IMR-90 (cell line): ENCODE measurements at regions of chr9 and their contacts with region 1.

Region 1: DNA sequence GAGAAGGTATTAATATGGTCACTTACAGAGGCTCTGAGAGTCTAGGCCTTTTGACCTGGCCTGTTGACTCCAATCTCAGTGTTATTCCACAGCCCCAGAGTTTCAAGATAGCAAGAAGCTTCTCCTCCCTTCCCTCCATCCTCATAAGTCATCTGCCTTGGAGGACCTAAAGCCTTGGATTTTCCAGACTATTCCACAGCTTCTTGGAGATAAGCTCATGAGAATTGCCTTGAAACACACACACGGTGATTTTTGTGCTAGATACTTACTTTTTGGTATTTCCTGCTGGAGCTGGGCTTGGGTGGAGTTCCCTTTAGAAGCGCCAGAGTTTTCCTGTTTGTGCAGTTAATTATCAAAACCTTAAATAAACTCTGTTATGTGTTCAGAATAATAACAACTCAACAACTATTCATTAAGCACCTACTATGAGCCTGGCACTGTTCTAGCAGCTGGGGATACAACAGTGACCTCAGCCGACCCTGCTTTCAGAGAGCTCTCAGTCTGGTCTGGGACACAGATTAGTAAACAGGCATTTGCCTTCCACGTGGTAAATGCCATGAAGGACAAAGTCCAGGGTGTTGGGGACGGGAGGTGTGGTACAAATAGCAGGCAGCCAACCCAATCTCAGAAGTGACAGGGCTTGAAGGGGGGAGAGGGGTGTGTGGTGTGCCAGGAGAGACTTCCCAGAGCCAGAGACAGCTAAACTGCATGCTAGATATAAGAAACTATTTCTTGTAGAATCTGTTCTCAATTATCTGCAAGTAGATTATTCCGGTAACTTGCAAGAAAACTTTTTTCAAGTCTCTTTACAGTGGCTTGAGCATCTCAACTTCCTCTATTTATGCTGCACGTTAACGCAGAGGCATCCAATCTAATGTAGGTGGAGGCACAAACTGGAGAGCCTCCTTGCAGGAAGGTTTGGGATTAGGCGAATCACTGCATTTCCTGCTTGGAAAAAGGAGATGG is 55.9 kb upstream of the KLF9 start:
- DNase-seq: no peak
- ATAC-seq: no peak
- H3K4me3 ChIP-seq: no peak overlapping the region
- H3K27ac ChIP-seq: no peak overlapping the region
- H3K4me1 ChIP-seq: peaks cover 5% of the 10 kb centered on the region
- H3K27me3 ChIP-seq: no peaks in the 10 kb centered on the region
- CTCF ChIP-seq: no peak
- POLR2A ChIP-seq: no peak
- RAD21 ChIP-seq: no peak

Region 2: DNA sequence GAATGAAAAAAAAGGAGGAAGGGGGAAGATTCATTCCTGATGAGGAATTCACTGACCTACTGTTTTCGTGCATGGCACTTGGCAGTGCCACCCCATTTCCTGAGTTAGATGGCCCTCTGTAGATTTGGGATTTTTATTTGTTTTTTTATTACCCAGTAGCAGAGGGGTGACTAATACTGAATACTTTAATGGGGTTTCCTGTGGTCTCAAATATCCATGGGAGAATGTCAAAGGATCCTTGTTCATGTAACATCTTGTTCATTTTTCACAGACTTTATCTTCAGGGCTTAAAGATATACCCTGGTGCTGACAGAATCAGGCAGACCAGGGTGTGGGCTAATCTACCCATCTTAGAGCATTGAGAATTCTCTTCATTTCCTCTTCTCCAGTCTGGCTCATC is 333.7 kb before region 1 on chr9:
- CTCF ChIA-PET with region 1: no interaction called
- POLR2A ChIA-PET with region 1: no interaction called
- dilution Hi-C with region 1: no loop called
- in situ Hi-C with region 1: no loop called
- intact Hi-C with region 1: no loop called
- DNase-seq: peak; percentile 69
- ATAC-seq: peak; percentile 52
- H3K4me3 ChIP-seq: no peak overlapping the region
- H3K27ac ChIP-seq: no peak overlapping the region
- H3K4me1 ChIP-seq: peaks cover 6% of the 10 kb centered on the region
- H3K27me3 ChIP-seq: no peaks in the 10 kb centered on the region
- CTCF ChIP-seq: no peak
- POLR2A ChIP-seq: no peak
- RAD21 ChIP-seq: no peak

Region 3: DNA sequence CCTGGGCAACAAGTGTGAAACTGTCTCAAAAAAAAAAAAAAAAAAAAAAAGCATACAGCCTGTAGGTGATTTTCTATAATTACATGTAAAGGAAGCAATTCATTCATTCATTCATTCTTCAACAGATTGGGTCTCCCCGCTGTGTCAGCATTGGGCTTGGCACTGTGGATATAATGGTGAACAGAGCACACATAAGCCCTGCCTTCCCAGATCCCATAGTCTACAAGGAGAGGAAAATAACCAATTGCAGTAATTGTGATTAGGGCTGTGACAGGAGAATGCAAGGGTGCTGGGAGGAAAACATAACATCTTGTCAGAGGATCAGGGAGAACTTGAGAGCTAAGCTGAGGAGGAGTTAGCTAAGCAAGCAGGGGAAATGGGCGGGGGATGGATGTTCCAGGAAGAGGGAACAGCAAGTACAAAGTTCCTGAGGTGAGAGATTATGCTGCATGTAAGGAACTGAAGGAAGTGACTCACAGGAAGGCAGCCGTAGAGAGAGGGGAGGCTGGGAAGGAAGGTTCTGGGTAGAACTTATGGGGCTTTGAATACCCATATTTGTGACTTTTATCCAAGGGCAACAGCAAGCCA is 31.9 kb before region 1 on chr9:
- CTCF ChIA-PET with region 1: interaction called, 3 read pairs
- POLR2A ChIA-PET with region 1: no interaction called
- dilution Hi-C with region 1: no loop called
- in situ Hi-C with region 1: no loop called
- intact Hi-C with region 1: loop called (anchors 2 kb)
- DNase-seq: peak; percentile 73
- ATAC-seq: peak; percentile 49
- H3K4me3 ChIP-seq: no peak overlapping the region
- H3K27ac ChIP-seq: peak overlapping the region; percentile 20; the same call in 1 of the 2 replicates
- H3K4me1 ChIP-seq: peaks cover 11% of the 10 kb centered on the region
- H3K27me3 ChIP-seq: no peaks in the 10 kb centered on the region
- CTCF ChIP-seq: no peak
- POLR2A ChIP-seq: no peak
- RAD21 ChIP-seq: no peak